Astrocyte of the cerebellum (primary cell): ENCODE measurements at regions of chr17 and their contacts with region 1.

Region 1: GRCh38 chr17:3282901-3283300 is 15.3 kb downstream of the OR3A1 start:
- DNase-seq: no peak
- H3K4me3 ChIP-seq: no peak overlapping the region
- CTCF ChIP-seq: no peak

Region 2: DNA sequence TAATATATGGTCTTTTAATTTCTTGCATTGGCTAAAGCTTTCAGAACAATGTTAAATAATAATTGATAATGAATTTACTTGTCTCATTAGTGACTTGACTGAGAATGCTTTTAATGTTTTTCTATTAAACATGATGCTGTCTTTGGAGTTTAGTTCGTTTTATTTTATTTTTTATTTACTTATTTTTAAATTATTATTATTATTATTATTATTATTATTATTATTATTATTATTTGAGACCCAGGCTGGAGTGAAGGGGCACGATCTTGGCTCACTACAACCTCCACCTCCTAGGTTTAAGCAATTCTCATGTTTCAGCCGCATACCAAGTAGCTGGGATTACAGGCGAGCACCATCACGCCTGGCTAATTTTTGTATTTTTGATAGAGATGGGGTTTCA is 132.7 kb after region 1 on chr17:
- in situ Hi-C with region 1: loop called (anchors 10 kb)
- DNase-seq: no peak
- H3K4me3 ChIP-seq: no peak overlapping the region
- CTCF ChIP-seq: no peak